ENCODE measurements at regions of chr13 and their contacts with region 1.

Region 1: GRCh38 chr13:48969685-48970084 is 6.0 kb upstream of the FNDC3A start:
- DNase-seq: no peak
- H3K4me3 ChIP-seq: no peak overlapping the region
- CTCF ChIP-seq: no peak

Region 2: DNA sequence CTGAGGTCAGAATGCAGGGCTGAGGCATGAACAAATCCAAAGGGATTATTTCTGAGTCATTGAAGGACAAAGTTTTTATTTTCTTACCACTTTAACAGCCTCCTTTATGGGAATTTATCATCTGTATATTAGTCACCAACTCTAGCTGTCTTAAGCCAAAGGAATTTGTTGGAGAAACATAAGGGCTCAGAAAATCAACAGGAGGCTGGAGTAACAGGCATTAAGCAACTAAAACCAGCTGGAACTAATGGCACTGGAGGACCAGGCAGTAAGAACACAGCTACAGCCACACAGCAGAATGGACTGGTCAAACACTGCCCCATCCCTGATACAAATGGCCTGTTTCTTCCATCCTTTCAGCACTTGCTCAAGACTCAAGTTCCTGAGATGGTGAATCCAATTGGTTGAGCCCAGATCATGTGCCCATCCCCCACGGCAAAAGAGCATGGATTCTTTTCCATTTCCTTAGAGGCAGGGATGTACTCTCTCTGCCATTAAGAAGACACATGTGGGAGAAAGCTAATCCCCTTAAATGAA is 151.1 kb before region 1 on chr13:
- in situ Hi-C with region 1: no loop called
- DNase-seq: peak; percentile 92
- H3K4me3 ChIP-seq: no peak overlapping the region
- CTCF ChIP-seq: no peak

Region 3: GRCh38 chr13:48892053-48892690 is 77.5 kb before region 1 on chr13:
- in situ Hi-C with region 1: loop called (anchors 5 kb)
- DNase-seq: peak; percentile 60
- H3K4me3 ChIP-seq: no peak overlapping the region
- CTCF ChIP-seq: no peak

Region 4: GRCh38 chr13:48919750-48920149 is 49.9 kb before region 1 on chr13:
- in situ Hi-C with region 1: loop called (anchors 5 kb)
- DNase-seq: no peak
- H3K4me3 ChIP-seq: no peak overlapping the region
- CTCF ChIP-seq: no peak

Region 5: DNA sequence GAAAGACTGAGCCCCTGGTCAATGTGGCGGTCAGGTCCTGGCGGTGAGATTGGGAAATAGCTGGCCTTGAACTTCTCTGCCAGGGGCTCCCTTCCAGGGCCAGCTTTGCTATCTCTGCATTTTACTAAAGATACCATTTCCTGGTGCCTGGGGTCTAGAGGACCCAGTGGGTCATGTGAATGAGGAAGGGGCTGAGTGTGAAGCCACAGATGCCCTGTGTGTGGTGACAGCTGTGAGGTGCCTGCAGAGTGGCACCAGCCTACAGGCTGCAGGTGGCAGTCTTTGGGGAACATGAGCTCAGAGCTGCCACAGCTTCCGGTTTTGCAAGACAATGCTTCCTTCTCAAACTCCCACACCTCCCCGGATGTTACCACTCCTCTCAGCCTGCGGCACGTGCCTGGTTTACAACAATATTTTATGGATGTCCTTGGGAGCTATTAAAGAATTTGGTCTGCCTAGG is 245.3 kb after region 1 on chr13:
- in situ Hi-C with region 1: no loop called
- DNase-seq: no peak
- H3K4me3 ChIP-seq: no peak overlapping the region
- CTCF ChIP-seq: no peak

Measured in astrocyte of the cerebellum (primary cell).